ENCODE measurements at regions of chr7 and their contacts with region 1.

Region 1: GRCh38 chr7:127792528-127793342 is 140.7 kb downstream of the SND1 start:
- DNase-seq: no peak
- H3K4me3 ChIP-seq: no peak overlapping the region
- H3K27ac ChIP-seq: peak overlapping the region in 2 of 59 donors; percentile 3 to 63
- H3K27me3 ChIP-seq: no peaks in the 10 kb centered on the region
- CTCF ChIP-seq: peak in 55 of 56 donors; percentile 16 to 66 (median 51)

Region 2: GRCh38 chr7:127717502-127718339 is 75.0 kb before region 1 on chr7:
- intact Hi-C with region 1: loop called in 1 of 2 experiments (anchors 10 kb)
- DNase-seq: no peak
- H3K4me3 ChIP-seq: no peak overlapping the region
- H3K27ac ChIP-seq: peak overlapping the region in 46 of 59 donors; percentile 5 to 81 (median 58)
- H3K27me3 ChIP-seq: no peaks in the 10 kb centered on the region
- CTCF ChIP-seq: no peak

Region 3: DNA sequence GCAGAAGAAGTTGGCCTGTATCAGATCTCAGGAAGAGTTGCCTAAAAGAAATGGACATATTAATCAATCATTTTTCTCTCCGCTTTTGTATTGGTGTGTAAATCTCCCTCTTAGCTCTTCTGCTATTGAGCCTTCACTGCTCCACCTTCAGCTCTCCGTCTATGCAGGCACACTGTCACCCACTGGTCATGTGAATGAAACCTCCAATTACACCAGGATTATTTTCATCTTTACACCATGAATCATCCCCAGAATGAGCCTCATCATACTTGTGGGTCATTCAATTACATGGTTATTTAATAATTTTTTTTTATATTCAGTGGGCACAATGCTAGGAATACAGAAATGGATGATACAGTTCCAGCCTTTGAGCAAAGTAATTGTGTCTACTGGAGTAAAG is 145.9 kb after region 1 on chr7:
- intact Hi-C with region 1: loop called in 1 of 2 experiments (anchors 10 kb)
- DNase-seq: peak in 1 of 10 donors; percentile 28
- H3K4me3 ChIP-seq: no peak overlapping the region
- H3K27ac ChIP-seq: peak overlapping the region in 4 of 59 donors; percentile 3 to 25 (median 11)
- H3K27me3 ChIP-seq: no peaks in the 10 kb centered on the region
- CTCF ChIP-seq: peak in 2 of 56 donors; percentile 8 to 10